A673 (cell line): ENCODE measurements at regions of chr17 and their contacts with region 1.

Region 1: DNA sequence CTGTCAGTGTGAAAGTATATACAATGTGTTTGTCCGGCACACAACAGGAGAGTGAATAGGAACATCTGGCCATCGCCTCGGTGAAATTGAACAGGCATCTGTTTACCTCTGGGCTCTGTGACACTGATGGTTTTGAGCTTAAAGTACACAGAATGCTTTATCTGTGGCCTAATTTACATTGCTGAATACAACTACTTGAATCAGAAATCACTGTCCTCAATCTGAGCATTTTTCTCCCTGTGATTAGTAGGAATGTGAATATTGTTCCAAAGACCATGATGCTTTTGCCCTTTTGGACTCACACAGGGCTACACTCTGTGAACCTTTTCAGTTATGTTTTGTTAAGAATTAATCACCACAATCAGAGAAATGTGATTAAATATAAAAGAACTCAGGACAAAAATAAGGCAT is 323.0 kb upstream of the TBX2 start:
- DNase-seq: no peak
- H3K4me3 ChIP-seq: no peak overlapping the region
- H3K27ac ChIP-seq: no peak overlapping the region
- H3K4me1 ChIP-seq: no peaks in the 10 kb centered on the region
- H3K27me3 ChIP-seq: no peaks in the 10 kb centered on the region
- CTCF ChIP-seq: no peak

Region 2: GRCh38 chr17:60802377-60802776 is 274.2 kb before region 1 on chr17:
- CTCF ChIA-PET with region 1: no interaction called
- POLR2A ChIA-PET with region 1: interaction called, 15 read pairs
- intact Hi-C with region 1: no loop called
- DNase-seq: no peak
- H3K4me3 ChIP-seq: no peak overlapping the region
- H3K27ac ChIP-seq: no peak overlapping the region
- H3K4me1 ChIP-seq: no peaks in the 10 kb centered on the region
- H3K27me3 ChIP-seq: no peaks in the 10 kb centered on the region
- CTCF ChIP-seq: no peak